Activated T-helper 1 cell treated with anti-CD3 and anti-CD28 coated beads, Interleukin-12 subunit alpha, Interleukin-12 subunit beta, Interleukin-2, Interleukin-4 antibody, amounts not matched to agents 30 ng/mL and 10 ng/mL and 1 ng/mL, durations not matched to agents 14 hours and 24 hours and 36 hours (primary cell): ENCODE measurements at regions of chr3 and their contacts with region 1.

Region 1: DNA sequence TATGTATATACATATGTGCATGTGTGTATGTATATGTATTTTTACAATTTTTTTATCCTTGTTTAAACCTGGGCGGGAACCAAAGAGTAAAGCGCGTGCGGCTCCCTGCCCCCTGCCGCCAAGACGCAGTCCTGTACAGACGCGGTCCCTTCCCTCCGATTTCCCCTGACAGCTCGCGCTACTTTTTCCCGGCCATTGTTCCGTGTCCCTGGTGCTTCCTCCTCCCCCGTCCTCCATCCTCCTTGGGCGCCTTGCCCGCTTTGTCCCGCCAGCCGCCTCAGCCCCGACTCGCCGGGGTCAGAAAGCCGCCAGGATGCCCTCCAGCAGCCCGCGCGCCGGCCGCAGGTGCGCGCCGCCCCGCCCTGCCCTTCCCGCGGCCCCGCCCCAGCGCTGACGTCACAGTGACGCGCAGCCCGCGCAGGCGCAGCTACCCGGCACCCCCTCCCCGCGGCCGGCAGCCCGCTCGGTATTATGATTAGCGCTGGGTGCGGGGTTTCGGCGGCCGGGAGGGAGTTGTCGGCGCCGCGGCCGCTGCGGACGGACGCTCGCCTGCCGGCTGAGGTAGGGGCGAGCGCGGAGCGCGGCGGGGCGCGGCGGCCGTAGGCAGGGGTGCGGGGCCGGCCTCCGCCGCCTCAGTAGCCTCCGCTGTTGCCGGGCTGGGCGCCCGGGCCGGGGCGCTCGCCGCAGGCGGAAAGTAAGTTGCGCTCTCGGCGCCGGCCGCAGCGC is at the start of gene SNRK:
- DNase-seq: peak; percentile 89
- H3K4me3 Mint-ChIP-seq: peak within 1 kb of the TSS; percentile 98
- H3K27ac Mint-ChIP-seq: peak within 1 kb of the TSS; percentile 97
- H3K4me1 Mint-ChIP-seq: peaks cover 49% of the 10 kb centered on the region
- H3K27me3 Mint-ChIP-seq: peaks cover 2% of the 10 kb centered on the region
- total RNA-seq, gene SNRK: 37.7 and 38.1 TPM in 2 replicates

Region 2: DNA sequence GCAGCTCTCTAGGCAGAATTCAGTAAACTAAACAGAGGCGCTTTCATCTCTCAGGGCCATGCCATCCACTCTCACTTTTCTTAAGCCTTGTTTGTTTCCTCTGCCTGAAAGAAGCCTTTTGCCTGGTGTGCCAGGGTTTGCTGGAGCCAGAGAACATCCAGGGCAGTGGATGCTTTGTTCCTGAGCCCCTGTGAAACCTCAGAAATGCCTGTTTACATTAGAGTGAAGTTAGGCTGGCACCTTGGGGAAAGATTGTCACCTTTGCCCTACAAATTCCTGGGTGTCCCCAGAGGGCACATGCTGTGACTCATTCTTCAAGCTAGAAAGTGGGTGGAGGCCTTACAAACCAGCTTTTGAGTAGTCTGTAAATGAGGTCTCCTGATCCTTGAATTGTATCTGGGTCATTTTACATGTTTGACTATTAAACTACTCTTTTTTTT is 1205.8 kb before region 1 on chr3:
- intact Hi-C with region 1: no loop called
- DNase-seq: no peak
- H3K4me3 Mint-ChIP-seq: peak overlapping the region; percentile 38
- H3K27ac Mint-ChIP-seq: peak overlapping the region; percentile 84
- H3K4me1 Mint-ChIP-seq: peaks cover 51% of the 10 kb centered on the region
- H3K27me3 Mint-ChIP-seq: no peaks in the 10 kb centered on the region

Region 3: GRCh38 chr3:42581709-42582473 is 704.4 kb before region 1 on chr3 and contains the start of gene SEC22C:
- intact Hi-C with region 1: loop called (anchors 5 kb)
- DNase-seq: peak; percentile 93
- H3K4me3 Mint-ChIP-seq: peak within 1 kb of the TSS; percentile 90
- H3K27ac Mint-ChIP-seq: peak within 1 kb of the TSS; percentile 93
- H3K4me1 Mint-ChIP-seq: peaks cover 61% of the 10 kb centered on the region
- H3K27me3 Mint-ChIP-seq: peaks cover 1% of the 10 kb centered on the region
- total RNA-seq, gene SEC22C: 37.5 and 38.3 TPM in 2 replicates

Region 4: DNA sequence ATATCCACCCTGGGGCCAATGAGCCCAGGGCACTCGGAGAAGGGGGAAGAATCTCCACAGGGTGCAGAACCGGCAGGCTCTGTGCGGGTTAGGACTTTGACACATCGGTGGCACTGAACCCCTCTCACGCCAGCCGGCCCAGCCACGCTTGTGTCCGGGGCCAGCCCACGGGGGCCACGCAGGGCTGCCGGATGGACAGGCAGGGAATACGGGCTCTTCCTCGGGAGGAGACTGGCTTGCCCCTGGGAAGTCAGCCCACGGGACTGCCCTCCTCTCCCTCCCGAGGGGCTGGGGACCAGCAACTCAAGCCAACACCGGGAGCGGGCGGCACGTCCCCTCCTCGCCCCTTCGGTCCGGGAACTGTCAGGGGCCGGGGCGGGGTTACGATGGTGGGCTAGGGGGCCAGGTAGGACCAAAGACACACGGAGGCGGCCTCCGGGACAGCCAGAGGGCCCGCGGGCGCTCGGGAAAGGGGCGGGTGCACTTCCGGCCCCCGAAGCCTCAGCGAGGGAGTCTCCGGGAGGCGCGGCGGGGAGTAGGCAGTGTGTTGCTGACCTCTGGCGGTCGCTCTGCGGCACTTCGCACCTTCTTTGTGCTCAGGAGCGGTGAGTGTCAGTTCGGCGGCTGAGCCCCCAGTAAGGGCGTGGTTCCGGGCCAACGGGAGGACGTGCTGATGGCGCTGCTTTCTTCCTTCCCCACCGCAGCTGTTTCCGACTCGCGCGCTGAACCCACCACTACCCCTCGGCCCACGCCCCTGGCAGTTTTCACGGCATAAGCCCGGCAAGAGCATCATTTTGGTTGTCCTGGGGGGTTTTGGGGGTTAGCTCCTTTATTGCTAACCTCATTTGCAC is 405.5 kb before region 1 on chr3:
- intact Hi-C with region 1: loop called (anchors 2 kb)
- DNase-seq: peak; percentile 83
- H3K4me3 Mint-ChIP-seq: peak overlapping the region; percentile 82
- H3K27ac Mint-ChIP-seq: peak overlapping the region; percentile 59
- H3K4me1 Mint-ChIP-seq: peaks cover 16% of the 10 kb centered on the region
- H3K27me3 Mint-ChIP-seq: peaks cover 2% of the 10 kb centered on the region

Region 5: GRCh38 chr3:43180027-43180426 is 106.3 kb before region 1 on chr3:
- intact Hi-C with region 1: loop called (anchors 2 kb)
- DNase-seq: peak; percentile 48
- H3K4me3 Mint-ChIP-seq: peak overlapping the region; percentile 36
- H3K27ac Mint-ChIP-seq: peak overlapping the region; percentile 80
- H3K4me1 Mint-ChIP-seq: peaks cover 62% of the 10 kb centered on the region
- H3K27me3 Mint-ChIP-seq: peaks cover 4% of the 10 kb centered on the region

Region 6: DNA sequence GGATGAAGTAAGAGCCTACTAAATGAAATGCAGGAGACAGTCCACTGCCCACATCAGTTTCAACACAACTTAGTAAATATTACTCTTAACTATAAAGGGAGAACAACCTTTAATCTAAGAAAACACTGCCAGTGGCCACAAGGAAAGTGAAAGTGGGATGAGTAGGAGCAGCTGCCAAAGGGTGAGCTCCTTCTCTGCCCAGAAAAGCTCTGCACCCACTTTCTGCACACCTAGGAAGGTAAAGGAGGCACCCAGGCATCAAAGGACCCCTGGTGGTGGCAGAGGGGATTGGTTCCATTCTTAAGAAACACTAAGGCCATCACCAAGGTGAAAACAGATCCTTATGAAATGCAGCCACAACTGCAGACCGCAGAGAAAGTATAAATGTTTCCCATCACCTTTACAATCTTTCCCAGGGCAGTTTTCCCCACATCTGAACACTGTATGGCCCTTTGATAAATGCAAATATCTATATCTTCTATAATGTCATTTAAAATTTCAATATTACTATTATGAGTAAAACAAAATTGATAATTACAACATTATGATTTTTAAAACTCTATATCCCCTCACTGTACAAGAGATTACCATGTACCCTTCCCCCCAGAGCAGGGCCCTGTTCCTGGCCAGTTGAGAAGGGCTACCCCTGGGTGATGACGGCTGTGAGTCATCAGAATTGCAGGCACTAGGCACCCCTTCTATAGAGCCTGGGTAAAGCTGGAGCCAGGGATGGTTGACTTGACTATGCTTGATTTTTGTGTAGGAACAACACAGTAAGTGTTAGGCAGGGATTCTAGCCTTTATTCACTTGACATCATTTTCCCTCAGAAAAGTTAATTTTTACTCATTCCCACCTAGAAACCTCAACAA is 92.0 kb after region 1 on chr3:
- intact Hi-C with region 1: loop called (anchors 1 kb)
- DNase-seq: peak; percentile 52
- H3K4me3 Mint-ChIP-seq: no peak overlapping the region
- H3K27ac Mint-ChIP-seq: no peak overlapping the region
- H3K4me1 Mint-ChIP-seq: peaks cover 17% of the 10 kb centered on the region
- H3K27me3 Mint-ChIP-seq: peaks cover 4% of the 10 kb centered on the region

Region 7: GRCh38 chr3:43405888-43406642 is 119.8 kb after region 1 on chr3:
- intact Hi-C with region 1: no loop called
- DNase-seq: no peak
- H3K4me3 Mint-ChIP-seq: no peak overlapping the region
- H3K27ac Mint-ChIP-seq: no peak overlapping the region
- H3K4me1 Mint-ChIP-seq: peaks cover 7% of the 10 kb centered on the region
- H3K27me3 Mint-ChIP-seq: peaks cover 3% of the 10 kb centered on the region

Region 8: DNA sequence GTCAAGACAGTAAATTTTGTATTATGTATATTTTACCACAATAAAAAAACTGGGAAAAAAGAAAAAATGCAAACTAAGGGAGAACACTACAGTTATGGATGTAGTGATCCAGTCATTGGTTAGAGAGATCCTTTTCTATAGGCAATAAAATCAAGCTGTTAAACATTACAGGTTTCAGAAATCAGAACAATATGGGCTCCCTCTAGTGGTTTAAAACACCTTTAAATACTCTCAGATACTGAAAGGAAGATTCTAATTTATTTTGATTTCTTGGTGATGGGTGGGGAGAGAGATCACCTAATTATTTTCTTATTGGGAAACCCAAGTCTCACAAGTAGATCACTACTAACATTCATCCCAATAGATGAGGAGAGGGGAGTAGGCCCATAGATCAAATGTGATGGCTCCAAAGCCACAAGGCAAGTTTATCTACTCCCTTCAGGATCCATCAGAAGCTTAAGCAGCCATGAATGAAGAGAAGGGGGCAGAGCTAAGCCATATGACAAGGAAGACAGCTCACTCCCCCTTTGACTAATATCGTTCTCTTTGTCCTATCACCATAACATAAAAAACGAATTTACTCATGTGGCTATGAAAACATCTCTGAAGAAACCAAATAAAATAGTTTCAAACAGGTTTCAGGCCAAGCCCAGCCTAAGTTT is 216.9 kb after region 1 on chr3:
- intact Hi-C with region 1: loop called (anchors 5 kb)
- DNase-seq: no peak
- H3K4me3 Mint-ChIP-seq: no peak overlapping the region
- H3K27ac Mint-ChIP-seq: no peak overlapping the region
- H3K4me1 Mint-ChIP-seq: peaks cover 34% of the 10 kb centered on the region
- H3K27me3 Mint-ChIP-seq: no peaks in the 10 kb centered on the region

Region 9: GRCh38 chr3:43559963-43560362 is 273.7 kb after region 1 on chr3:
- intact Hi-C with region 1: no loop called
- DNase-seq: no peak
- H3K4me3 Mint-ChIP-seq: no peak overlapping the region
- H3K27ac Mint-ChIP-seq: no peak overlapping the region
- H3K4me1 Mint-ChIP-seq: no peaks in the 10 kb centered on the region
- H3K27me3 Mint-ChIP-seq: peaks cover 3% of the 10 kb centered on the region

Region 10: DNA sequence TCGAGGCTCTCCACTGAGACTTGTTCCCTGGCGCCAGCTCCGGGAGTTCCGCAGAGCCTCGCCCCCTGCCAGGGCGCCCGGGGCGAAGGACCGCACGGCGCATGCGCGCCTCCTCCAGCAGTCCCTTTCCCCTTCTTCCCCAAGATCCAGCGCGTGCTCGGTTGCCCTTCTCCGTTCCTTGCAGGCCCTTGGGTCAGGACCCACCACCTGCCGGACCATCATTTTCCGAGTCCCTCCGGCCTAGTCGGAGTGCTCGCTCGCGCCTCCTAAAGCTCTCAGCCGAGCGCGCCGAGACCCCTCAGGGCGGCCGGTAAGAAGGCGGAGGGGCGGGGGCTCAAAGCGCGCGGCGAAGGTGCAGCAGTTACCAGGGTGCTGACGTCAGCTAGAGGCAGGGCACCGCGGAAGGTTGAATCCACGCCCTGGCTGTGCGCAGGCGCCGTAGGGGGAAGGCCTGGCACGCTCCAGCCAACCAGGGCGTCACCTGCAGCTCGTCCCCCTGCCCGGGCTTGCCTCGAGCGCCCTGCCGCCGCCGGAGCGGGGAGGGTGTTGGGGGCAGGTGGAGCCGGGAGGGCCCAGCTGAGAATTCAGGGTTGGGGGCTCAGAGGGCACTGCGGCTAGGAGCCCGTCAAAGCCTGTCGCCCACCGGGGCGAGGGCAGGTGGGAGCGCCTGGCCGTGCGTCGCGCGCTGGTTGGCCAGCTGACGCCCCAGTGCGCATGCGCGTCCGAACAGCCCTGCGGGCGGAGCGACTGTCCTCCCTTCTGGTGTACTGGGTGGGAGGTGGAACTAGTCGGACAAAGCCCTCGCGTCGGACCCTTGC is 1051.9 kb after region 1 on chr3 and contains the start of gene TCAIM:
- intact Hi-C with region 1: loop called (anchors 5 kb)
- DNase-seq: peak; percentile 98
- H3K4me3 Mint-ChIP-seq: peak within 1 kb of the TSS; percentile 98
- H3K27ac Mint-ChIP-seq: peak within 1 kb of the TSS; percentile 97
- H3K4me1 Mint-ChIP-seq: peaks cover 17% of the 10 kb centered on the region
- H3K27me3 Mint-ChIP-seq: peaks cover 4% of the 10 kb centered on the region
- total RNA-seq, gene TCAIM: 13.6 and 14.4 TPM in 2 replicates